Pancreas (tissue), 10 donors: ENCODE measurements at regions of chr11 and their contacts with region 1.

Region 1: DNA sequence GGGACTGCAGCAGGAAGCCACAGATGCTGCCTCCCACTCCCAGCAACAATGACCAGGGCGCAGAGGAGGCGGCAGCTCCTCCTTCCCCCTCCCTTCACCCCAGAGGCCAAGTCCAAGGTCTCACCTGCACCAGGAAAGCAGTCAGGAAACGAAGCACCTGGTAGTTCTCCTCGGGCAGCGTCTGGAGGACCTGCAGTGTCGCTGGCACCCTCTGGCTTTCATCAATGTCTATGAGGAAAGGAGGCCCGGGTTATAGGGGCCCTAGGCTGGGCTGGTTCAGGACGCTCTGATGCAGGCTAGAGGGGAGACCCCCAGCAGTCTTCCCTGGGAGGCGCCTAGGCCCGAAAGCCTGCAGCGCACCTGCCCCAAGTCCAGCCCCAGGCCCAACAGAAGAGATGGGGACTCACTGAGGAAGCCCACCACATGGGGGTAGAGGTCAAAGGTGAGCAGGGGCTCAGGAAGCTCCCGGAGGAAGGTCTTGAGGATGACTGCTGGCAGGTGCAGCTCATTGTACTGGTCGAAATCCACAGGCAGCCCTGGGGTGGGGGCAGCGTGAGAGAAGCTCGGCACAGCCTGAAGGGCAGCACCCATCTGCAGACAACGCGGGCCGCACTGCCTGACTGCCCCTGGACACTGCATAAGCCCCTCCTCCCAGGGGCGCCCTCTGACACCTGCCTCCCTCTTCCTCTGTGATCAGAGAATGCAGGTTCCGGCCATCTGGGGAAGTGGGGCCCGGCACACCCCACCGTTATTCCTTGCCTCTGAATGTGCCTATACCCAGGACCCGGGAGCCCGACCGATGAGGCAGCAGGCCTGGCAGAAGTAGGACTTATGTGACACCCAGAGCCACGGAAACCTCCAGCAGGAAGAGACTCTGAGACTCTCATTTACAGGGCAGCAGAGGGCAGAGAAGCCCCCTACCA is 20.9 kb downstream of the ARHGAP1 start:
- DNase-seq: peak in 3 of 6 donors; percentile 48 to 70 (median 56)
- ATAC-seq: peak in 3 of 4 donors; percentile 5 to 67 (median 38)
- H3K4me3 ChIP-seq: no peak overlapping the region
- H3K27ac ChIP-seq: peak overlapping the region in 1 of 4 donors; percentile 14
- H3K4me1 ChIP-seq: peaks cover 16 to 20% (median 17%) of the 10 kb centered on the region in 3 donors
- H3K27me3 ChIP-seq: no peaks in the 10 kb centered on the region
- CTCF ChIP-seq: no peak

Region 2: DNA sequence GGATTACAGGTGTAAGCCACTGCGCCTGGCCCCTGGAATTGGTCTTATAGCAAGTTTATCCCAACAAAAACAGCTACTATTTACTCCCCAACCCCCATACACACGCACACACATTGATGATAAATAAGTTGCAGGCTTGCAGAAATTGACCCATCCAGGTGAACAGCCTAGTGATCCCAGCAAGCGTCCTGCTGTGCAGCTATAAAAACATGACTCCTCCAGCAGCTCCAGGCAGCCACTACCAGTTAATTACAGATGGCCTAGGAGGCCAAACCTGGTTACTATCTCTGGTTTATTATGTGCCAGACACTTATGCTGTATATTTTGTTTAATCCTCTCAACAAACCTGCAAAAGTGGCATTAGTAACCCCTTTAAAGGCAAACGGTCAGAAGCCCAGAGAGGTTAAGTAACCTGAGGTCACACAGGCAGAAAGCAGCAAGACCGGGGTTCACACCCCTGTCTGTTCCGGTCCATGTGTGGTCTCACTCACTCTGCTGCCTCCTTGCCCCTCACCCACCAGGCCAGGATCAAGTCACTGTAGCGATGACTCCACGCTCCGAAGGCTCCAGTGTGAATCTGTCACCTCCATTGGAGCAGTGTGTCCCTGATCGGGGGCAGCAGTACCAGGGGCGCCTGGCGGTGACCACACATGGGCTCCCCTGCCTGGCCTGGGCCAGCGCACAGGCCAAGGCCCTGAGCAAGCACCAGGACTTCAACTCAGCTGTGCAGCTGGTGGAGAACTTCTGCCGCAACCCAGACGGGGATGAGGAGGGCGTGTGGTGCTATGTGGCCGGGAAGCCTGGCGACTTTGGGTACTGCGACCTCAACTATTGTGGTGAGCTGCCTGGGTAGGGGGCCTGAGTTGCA is 46.1 kb after region 1 on chr11:
- intact Hi-C with region 1: loop called in 1 of 3 experiments (anchors 2 kb)
- DNase-seq: no peak
- ATAC-seq: no peak
- H3K4me3 ChIP-seq: no peak overlapping the region
- H3K27ac ChIP-seq: no peak overlapping the region
- H3K4me1 ChIP-seq: no peaks in the 10 kb centered on the region
- H3K27me3 ChIP-seq: no peaks in the 10 kb centered on the region
- CTCF ChIP-seq: no peak